ENCODE measurements at regions of chr1 and their contacts with region 1.

Region 1: GRCh38 chr1:29341936-29342335 is 105.6 kb downstream of the PTPRU start:
- DNase-seq: no peak
- H3K4me3 ChIP-seq: no peak overlapping the region
- H3K27ac ChIP-seq: no peak overlapping the region
- H3K4me1 ChIP-seq: no peaks in the 10 kb centered on the region
- H3K27me3 ChIP-seq: no peaks in the 10 kb centered on the region
- CTCF ChIP-seq: peak in 1 of 2 donors; percentile 33

Region 2: DNA sequence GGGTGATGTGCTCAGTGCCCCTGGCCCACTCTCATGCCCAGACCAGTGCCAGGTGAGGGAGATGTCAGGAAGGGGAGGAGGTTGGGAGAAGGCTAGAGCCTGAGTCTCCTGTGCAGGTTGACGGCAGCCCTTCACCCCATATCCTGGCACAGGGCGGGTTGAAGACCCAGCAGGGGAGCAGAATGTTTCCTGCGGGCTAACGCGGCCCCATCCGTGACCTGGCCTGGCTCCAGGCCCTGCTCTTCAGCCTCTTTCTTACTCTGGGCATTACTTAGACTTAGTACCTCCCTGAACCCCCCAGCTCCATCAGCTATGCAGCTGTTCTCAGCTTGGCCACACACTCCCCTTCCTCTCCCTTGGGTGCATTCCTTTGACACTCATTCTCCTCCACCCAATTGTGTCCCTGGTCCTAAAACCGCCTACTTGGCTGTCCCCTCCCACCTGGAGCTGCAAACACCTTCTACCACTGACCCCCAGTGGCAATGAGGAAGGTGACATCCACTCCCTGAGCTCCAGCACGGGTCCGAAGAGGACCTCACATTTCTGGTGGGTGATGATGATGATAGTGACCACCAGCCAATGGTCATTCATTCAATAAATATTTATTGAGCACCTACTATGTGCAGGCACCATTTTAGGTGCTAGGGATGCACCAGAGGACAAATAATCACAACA is 73.4 kb after region 1 on chr1:
- CTCF ChIA-PET with region 1: no interaction called
- dilution Hi-C with region 1: no loop called
- in situ Hi-C with region 1: no loop called
- intact Hi-C with region 1: loop called (anchors 5 kb)
- DNase-seq: peak; percentile 27
- H3K4me3 ChIP-seq: no peak overlapping the region
- H3K27ac ChIP-seq: no peak overlapping the region
- H3K4me1 ChIP-seq: no peaks in the 10 kb centered on the region
- H3K27me3 ChIP-seq: no peaks in the 10 kb centered on the region
- CTCF ChIP-seq: peak; percentile 13 to 36

Measured in mammary epithelial cell (primary cell).